Dorsolateral prefrontal cortex (tissue), 120 donors: ENCODE measurements at regions of chr14 and their contacts with region 1.

Region 1: GRCh38 chr14:28766469-28767238 is at the start of gene FOXG1:
- DNase-seq: peak in 6 of 10 donors; percentile 72 to 84 (median 82)
- H3K4me3 ChIP-seq: peak within 1 kb of the TSS; percentile 35 to 85 (median 67)
- H3K27ac ChIP-seq: peak within 1 kb of the TSS; percentile 31 to 98 (median 93)
- H3K27me3 ChIP-seq: peaks cover 0 to 96% (median 33%) of the 10 kb centered on the region in 45 donors
- CTCF ChIP-seq: no peak
- total RNA-seq, gene FOXG1: 25.8 to 72.3 (median 52.9) TPM

Region 2: GRCh38 chr14:28751467-28752058 is 15.1 kb before region 1 on chr14:
- intact Hi-C with region 1: no loop called
- DNase-seq: peak in 4 of 10 donors; percentile 45 to 63 (median 52)
- H3K4me3 ChIP-seq: no peak overlapping the region
- H3K27ac ChIP-seq: no peak overlapping the region
- H3K27me3 ChIP-seq: peaks cover 0 to 33% (median 0%) of the 10 kb centered on the region in 45 donors
- CTCF ChIP-seq: peak; percentile 36 to 75 (median 58)

Region 3: GRCh38 chr14:28785096-28785952 is 18.7 kb after region 1 on chr14:
- intact Hi-C with region 1: no loop called
- DNase-seq: peak in 7 of 10 donors; percentile 46 to 74 (median 67)
- H3K4me3 ChIP-seq: peak overlapping the region; percentile 31 to 76 (median 63)
- H3K27ac ChIP-seq: peak overlapping the region in 58 of 59 donors; percentile 44 to 97 (median 92)
- H3K27me3 ChIP-seq: peaks cover 0 to 61% (median 17%) of the 10 kb centered on the region in 45 donors
- CTCF ChIP-seq: no peak

Region 4: GRCh38 chr14:29390046-29390832 is 623.6 kb after region 1 on chr14:
- intact Hi-C with region 1: loop called in 1 of 2 experiments (anchors 10 kb)
- DNase-seq: no peak
- H3K4me3 ChIP-seq: peak overlapping the region in 57 of 59 donors; percentile 1 to 60 (median 37)
- H3K27ac ChIP-seq: peak overlapping the region in 35 of 59 donors; percentile 1 to 75 (median 47)
- H3K27me3 ChIP-seq: peaks cover 0 to 6% (median 0%) of the 10 kb centered on the region in 45 donors
- CTCF ChIP-seq: no peak